Upper lobe of right lung (tissue), 1 donor: ENCODE measurements at regions of chr11 and their contacts with region 1.

Region 1: DNA sequence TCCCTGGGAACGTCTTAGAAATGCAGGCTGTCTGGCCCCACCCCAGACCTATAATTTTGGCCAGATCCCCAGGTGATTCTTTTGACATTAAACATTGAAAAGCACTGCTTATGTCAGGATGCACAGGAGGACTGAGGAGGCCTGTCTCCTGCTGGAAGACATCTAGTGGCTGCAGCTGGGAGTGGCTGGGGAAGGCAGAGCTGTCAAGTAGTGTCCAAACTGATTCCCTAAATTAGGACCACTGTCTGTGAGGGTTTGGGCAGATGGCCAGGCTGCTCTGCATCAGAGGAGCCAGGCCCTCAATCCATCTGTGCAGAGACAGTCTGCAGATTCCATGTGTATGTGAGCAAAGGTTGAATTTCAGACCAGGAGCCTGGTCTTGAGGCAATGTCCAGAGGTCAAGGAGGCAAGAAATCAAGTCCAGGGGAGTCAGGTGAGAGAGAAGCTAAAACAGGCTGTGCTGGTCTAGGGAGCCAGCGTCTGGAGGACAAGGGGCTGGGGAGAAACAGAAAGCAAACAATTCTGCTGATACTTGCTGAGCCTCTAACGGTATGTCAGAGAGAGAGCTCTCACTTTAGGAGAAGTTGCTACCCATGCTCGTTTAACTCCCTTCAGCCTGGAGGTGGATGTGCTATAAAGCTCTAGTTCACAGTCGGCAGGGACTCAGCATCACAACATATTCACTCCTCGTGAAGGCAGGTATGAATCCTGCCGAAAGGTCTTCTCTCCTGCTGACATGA is 15.3 kb upstream of the SYTL2 start:
- DNase-seq: no peak
- ATAC-seq: peak; percentile 15
- H3K4me3 ChIP-seq: no peak overlapping the region
- H3K27ac ChIP-seq: no peak overlapping the region
- H3K4me1 ChIP-seq: peaks cover 4% of the 10 kb centered on the region
- H3K27me3 ChIP-seq: no peaks in the 10 kb centered on the region
- CTCF ChIP-seq: peak; percentile 43

Region 2: GRCh38 chr11:85694386-85694980 is 131.8 kb before region 1 on chr11:
- intact Hi-C with region 1: loop called (anchors 10 kb)
- DNase-seq: no peak
- ATAC-seq: peak; percentile 33
- H3K4me3 ChIP-seq: no peak overlapping the region
- H3K27ac ChIP-seq: no peak overlapping the region
- H3K4me1 ChIP-seq: peaks cover 4% of the 10 kb centered on the region
- H3K27me3 ChIP-seq: no peaks in the 10 kb centered on the region
- CTCF ChIP-seq: peak; percentile 55